Activated CD4-positive, alpha-beta T cell treated with anti-CD3 and anti-CD28 coated beads, Interleukin-2, amount 10 ng/mL, durations not matched to agents 7 days and 5 days (primary cell): ENCODE measurements at regions of chr9 and their contacts with region 1.

Region 1: DNA sequence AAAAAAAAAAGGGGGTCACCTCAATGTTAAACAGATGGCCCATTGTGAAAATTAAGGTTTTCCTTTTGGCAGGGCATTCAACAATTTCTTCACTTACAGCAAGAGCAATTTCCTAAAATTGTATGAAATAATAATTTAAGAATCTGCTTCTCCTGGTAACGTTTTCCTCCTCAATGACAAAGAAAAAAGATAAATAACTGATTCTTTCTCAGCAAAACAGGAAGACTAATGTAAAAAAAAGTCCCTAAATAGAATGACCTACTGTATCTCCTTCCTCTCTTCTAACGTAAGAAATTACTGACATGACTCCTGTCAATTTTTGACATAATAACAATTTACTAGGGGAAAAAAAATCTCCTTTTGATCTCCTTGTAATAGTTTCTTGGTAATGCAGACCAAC is 25.5 kb downstream of the ABHD17B start:
- DNase-seq: no peak
- H3K4me3 Mint-ChIP-seq: no peak overlapping the region
- H3K27ac Mint-ChIP-seq: peak overlapping the region; percentile 57
- H3K4me1 Mint-ChIP-seq: peaks cover 28% of the 10 kb centered on the region
- H3K27me3 Mint-ChIP-seq: no peaks in the 10 kb centered on the region

Region 2: DNA sequence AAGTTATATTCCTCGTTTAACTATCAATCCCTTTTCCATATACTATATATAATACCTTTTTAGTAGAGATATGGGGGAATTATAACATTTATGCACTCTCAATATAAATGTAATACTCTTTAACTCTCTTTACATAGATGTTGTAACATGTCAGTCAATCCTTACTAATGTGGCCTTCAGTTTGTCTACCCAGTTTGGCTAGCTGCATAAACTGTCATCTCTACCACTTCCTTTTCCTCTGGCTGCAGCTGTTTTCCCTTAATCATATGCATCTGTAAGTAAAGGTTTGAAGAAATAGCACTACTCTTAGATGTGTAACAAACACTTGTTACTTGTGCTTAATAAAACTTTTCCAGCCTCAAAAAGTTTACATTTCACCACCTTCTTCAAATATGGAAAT is 12.1 kb after region 1 on chr9:
- CTCF ChIA-PET with region 1: interaction called, 11 read pairs
- POLR2A ChIA-PET with region 1: no interaction called
- DNase-seq: peak; percentile 61
- H3K4me3 Mint-ChIP-seq: peak overlapping the region; percentile 61
- H3K27ac Mint-ChIP-seq: peak overlapping the region; percentile 86
- H3K4me1 Mint-ChIP-seq: peaks cover 83% of the 10 kb centered on the region
- H3K27me3 Mint-ChIP-seq: no peaks in the 10 kb centered on the region

Region 3: GRCh38 chr9:71916834-71917534 is 31.5 kb after region 1 on chr9:
- CTCF ChIA-PET with region 1: no interaction called
- POLR2A ChIA-PET with region 1: no interaction called
- DNase-seq: no peak
- H3K4me3 Mint-ChIP-seq: no peak overlapping the region
- H3K27ac Mint-ChIP-seq: no peak overlapping the region
- H3K4me1 Mint-ChIP-seq: peaks cover 43% of the 10 kb centered on the region
- H3K27me3 Mint-ChIP-seq: no peaks in the 10 kb centered on the region

Region 4: DNA sequence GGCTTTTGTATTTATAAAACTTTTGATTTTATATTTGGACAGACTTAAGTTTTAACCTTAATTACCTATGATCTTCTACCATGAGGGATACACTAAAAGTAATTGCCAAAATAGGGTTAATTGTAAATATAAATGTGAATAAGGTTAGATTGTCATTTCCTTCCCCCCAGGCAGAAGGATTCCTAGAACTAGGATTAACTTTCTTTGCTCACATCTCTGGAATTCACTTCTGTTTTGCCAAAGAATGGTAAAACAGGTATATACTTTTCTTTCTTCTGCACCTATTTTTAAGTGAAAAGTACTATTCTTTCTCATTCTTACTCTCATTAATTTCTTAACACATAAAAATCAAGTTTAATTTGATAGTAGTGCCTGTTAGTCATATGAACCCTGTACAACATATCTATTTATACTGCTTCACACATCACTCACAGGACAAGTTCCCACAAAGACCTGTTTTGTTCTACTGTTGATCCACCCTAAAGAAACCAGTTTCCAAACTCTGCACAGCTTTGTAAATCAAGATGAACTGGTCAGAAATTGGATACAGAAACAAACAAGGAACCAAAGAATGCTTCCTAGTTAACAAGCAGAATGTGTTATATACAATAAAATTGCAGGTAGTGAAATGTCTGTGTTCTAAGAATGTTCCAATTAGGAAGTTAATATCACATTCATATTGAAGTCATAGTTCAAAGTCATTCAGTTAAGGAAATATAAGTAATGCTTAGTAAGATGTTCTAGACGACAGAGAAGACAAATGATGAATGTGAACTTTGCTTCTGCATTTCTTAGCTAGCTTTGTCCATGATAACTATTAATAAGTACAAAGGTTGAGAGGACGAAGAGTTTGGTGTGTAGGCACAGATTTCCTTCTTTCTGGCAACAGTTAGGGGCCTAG is 59.3 kb after region 1 on chr9:
- CTCF ChIA-PET with region 1: no interaction called
- POLR2A ChIA-PET with region 1: no interaction called
- DNase-seq: no peak
- H3K4me3 Mint-ChIP-seq: no peak overlapping the region
- H3K27ac Mint-ChIP-seq: no peak overlapping the region
- H3K4me1 Mint-ChIP-seq: peaks cover 6% of the 10 kb centered on the region
- H3K27me3 Mint-ChIP-seq: no peaks in the 10 kb centered on the region